MCF 10A (cell line): ENCODE measurements at regions of chr11 and their contacts with region 1.

Region 1: DNA sequence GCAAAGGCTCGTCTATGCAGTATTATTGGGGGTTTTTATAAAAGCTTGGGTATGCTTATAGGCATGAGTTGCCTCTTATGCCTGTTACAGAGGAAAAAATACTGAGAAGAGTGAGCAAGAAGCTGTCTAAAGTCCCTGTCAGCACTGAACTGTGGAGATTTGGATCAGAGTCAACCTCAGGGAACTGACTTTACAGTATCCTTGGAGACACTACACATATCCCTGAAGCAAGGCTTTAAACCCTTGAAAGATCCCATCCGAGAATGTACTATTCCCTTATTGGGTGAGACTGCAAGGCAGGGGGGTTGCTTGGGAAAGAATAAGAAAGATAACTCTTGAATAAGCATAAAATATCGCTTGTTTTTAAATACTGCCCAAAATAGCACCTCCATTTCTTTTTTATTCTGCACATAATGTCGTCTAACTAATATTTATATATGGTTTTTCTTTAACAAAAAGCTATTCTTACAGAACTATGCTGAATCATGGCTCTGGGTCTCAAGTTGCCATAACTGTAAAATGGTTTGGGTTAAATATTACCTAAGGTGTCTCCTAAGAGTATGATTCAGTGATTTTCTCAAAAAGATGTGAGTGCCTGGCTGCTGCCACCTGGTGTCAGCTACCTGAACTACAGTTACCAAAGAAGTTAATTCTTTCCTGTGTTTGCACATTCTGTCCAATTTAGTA is 1062.8 kb downstream of the DLG2 start:
- DNase-seq: peak; percentile 48
- H3K4me3 Mint-ChIP-seq: no peak overlapping the region
- H3K27ac Mint-ChIP-seq: no peak overlapping the region
- H3K4me1 Mint-ChIP-seq: no peaks in the 10 kb centered on the region
- H3K27me3 Mint-ChIP-seq: peaks cover 67% of the 10 kb centered on the region
- CTCF ChIP-seq: peak; percentile 62

Region 2: GRCh38 chr11:84420271-84420670 is 144.1 kb before region 1 on chr11:
- CTCF ChIA-PET with region 1: no interaction called
- POLR2A ChIA-PET with region 1: no interaction called
- intact Hi-C with region 1: no loop called
- DNase-seq: no peak
- H3K4me3 Mint-ChIP-seq: no peak overlapping the region
- H3K27ac Mint-ChIP-seq: no peak overlapping the region
- H3K4me1 Mint-ChIP-seq: no peaks in the 10 kb centered on the region
- H3K27me3 Mint-ChIP-seq: peaks cover 27% of the 10 kb centered on the region
- CTCF ChIP-seq: no peak

Region 3: DNA sequence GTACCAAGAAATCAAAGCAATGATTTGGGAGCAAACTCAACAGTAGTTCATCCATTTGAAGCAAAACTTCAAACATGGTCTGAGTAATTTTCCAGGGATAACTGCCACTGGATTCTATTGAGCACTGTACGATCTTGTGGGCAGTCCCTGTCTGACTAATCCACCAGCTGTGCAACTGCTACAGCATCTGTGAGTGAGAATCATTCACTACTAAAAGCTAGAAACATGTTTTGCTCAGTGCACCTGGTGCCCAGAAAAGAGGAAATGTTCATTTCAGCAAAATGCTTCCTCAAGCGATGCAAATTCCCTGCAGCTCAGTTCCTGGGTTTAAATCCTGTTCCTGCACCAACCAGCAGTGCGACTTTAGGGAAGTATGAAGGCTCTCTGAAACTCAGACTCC is 15.1 kb before region 1 on chr11:
- CTCF ChIA-PET with region 1: interaction called, 39 read pairs
- POLR2A ChIA-PET with region 1: no interaction called
- intact Hi-C with region 1: no loop called
- DNase-seq: no peak
- H3K4me3 Mint-ChIP-seq: no peak overlapping the region
- H3K27ac Mint-ChIP-seq: no peak overlapping the region
- H3K4me1 Mint-ChIP-seq: no peaks in the 10 kb centered on the region
- H3K27me3 Mint-ChIP-seq: peaks cover 19% of the 10 kb centered on the region
- CTCF ChIP-seq: no peak

Region 4: GRCh38 chr11:84588131-84588829 is 24.0 kb after region 1 on chr11:
- CTCF ChIA-PET with region 1: interaction called, 11 read pairs
- POLR2A ChIA-PET with region 1: no interaction called
- intact Hi-C with region 1: no loop called
- DNase-seq: no peak
- H3K4me3 Mint-ChIP-seq: no peak overlapping the region
- H3K27ac Mint-ChIP-seq: no peak overlapping the region
- H3K4me1 Mint-ChIP-seq: no peaks in the 10 kb centered on the region
- H3K27me3 Mint-ChIP-seq: no peaks in the 10 kb centered on the region
- CTCF ChIP-seq: no peak

Region 5: GRCh38 chr11:84642501-84642900 is 78.2 kb after region 1 on chr11:
- CTCF ChIA-PET with region 1: no interaction called
- POLR2A ChIA-PET with region 1: no interaction called
- intact Hi-C with region 1: no loop called
- DNase-seq: no peak
- H3K4me3 Mint-ChIP-seq: no peak overlapping the region
- H3K27ac Mint-ChIP-seq: no peak overlapping the region
- H3K4me1 Mint-ChIP-seq: no peaks in the 10 kb centered on the region
- H3K27me3 Mint-ChIP-seq: no peaks in the 10 kb centered on the region
- CTCF ChIP-seq: no peak